ENCODE measurements at regions of chr3 and their contacts with region 1.

Region 1: GRCh38 chr3:38528457-38528856 is 32.3 kb downstream of the EXOG start:
- DNase-seq: no peak
- CTCF ChIP-seq: peak; percentile 8

Region 2: GRCh38 chr3:38247366-38248035 is 281.0 kb before region 1 on chr3:
- in situ Hi-C with region 1: no loop called
- DNase-seq: no peak
- CTCF ChIP-seq: no peak

Region 3: DNA sequence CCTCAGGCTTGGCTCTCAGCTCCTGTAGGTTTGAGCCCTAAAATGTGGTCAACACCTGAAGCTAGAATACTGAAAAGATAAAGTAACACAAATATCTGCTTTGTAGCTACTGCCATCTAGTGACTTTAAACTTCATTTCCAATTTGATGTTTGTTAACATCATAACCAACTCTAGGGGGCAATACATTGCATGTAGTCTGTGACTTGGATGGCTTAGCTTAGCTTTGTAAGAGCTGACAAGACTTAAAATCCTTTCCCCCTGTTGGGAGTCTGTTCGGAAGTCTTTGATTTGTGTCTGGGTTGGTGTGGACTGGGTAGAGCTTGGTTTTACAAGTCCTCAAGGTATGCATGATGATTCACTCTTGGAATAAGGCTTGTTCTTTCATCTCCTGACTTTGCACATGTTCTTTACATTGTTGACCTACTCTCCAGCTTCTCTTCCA is 471.6 kb after region 1 on chr3:
- in situ Hi-C with region 1: loop called (anchors 25 kb)
- DNase-seq: peak; percentile 66
- CTCF ChIP-seq: peak; percentile 86

Measured in GM13977 (cell line).